ENCODE measurements at regions of chr4 and their contacts with region 1.

Region 1: GRCh38 chr4:82373816-82374625 is at the start of gene HNRNPD:
- DNase-seq: peak; percentile 89
- ATAC-seq: peak; percentile 94
- H3K4me3 Mint-ChIP-seq: peak within 1 kb of the TSS; percentile 94
- H3K27ac Mint-ChIP-seq: peak within 1 kb of the TSS; percentile 98
- H3K4me1 Mint-ChIP-seq: peaks cover 38% of the 10 kb centered on the region
- H3K27me3 Mint-ChIP-seq: no peaks in the 10 kb centered on the region
- total RNA-seq, gene HNRNPD: 356 to 360 TPM

Region 2: DNA sequence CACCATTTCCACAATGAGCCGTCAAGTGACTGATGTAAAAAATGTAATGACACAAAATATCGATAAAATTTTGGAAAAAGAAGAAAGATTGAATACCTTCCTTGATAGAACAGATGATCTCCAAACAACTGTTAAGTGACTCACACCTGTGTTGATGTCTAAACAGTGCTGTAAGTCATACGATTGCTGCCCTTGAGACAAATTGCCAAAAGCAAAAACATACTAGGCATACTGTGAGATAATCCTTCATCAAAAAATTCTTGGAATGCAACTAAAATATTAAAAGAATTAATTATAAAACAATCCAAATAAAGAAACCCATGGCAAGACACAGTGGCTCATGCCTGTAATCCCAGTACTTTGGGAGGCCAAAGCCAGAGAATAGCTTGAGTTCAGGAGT is 53.7 kb before region 1 on chr4:
- POLR2A ChIA-PET with region 1: no interaction called
- DNase-seq: no peak
- ATAC-seq: no peak
- H3K4me3 Mint-ChIP-seq: no peak overlapping the region
- H3K27ac Mint-ChIP-seq: no peak overlapping the region
- H3K4me1 Mint-ChIP-seq: peaks cover 2% of the 10 kb centered on the region
- H3K27me3 Mint-ChIP-seq: peaks cover 7% of the 10 kb centered on the region

Region 3: DNA sequence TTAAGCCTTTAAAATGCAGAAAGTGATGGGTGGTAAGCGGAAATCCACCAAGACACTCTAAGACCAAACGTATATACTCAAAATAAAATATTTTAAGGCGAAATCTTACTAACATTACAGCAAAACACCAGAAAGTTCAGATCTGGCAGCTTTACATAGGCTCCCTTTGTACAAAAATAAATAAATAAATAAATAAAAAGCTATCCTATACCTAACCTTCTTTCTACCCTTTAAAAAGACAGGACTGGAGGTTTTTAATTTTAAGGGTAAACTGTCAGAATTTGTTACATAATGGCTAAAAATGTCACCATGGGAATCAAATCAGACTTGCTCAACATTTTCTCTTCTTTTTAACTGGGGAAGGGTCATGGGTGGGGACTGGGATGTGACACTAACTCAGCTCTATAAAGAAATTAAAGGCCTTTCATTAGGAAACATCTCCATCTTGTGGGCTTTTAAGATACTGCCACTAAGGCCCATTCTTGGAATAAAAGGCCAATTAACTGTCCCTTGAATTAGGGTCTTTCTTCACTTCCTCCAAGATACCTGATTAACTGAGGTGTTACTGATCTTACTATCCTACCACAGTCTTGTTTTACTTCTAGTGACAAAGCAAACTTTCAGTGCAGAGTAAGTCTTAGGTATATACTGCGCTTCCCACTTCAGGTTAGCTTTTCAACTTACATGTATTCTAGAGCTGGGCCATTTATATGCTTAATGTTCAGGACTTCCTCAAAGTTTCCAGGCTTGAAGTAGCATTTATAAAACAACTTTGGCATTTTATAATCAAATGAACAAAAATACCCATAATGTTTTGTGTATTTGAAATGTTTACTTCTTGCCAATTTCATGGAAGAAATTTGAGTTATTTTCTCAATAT is 13.5 kb before region 1 on chr4:
- POLR2A ChIA-PET with region 1: interaction called, 10 read pairs
- DNase-seq: no peak
- ATAC-seq: no peak
- H3K4me3 Mint-ChIP-seq: peak overlapping the region; percentile 4
- H3K27ac Mint-ChIP-seq: peak overlapping the region; percentile 44
- H3K4me1 Mint-ChIP-seq: peaks cover 67% of the 10 kb centered on the region
- H3K27me3 Mint-ChIP-seq: no peaks in the 10 kb centered on the region

Region 4: DNA sequence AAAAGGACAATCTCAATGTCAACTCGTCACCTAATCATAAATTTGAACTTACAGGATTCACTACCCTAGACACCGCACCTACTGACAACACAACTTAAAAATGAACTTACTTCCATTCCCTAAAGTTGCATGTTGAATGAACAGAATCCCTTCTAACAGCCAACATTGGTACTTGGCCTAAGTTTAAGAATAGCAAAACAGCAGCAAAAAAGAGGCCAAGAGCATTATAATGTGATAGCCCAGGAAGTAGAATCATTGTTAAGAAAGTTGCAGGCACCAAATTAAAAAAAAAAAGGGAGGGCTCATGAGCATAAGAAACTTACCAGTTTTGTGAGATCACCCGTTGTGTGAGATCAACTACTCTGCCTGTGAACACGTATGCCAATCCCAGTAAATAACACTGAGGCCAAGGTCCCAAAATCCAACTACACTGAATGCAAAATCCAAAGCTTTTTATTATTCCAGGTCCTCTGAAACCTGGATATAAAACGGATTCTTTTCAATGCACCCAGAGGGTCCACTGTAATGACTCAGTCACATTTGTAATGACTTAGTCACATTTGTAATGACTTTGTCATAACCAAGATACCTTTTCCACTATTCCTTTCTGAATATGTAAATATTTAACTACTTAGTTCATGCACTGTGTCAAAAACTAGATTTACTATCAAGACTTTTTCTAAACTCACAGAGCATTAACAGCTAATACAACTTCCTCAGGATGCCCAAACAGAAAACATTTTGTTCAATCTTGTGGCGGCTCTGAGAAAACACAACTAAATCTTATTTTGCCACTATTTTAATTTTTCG is 49.4 kb after region 1 on chr4:
- POLR2A ChIA-PET with region 1: interaction called, 95 read pairs
- DNase-seq: no peak
- ATAC-seq: no peak
- H3K4me3 Mint-ChIP-seq: no peak overlapping the region
- H3K27ac Mint-ChIP-seq: no peak overlapping the region
- H3K4me1 Mint-ChIP-seq: peaks cover 41% of the 10 kb centered on the region
- H3K27me3 Mint-ChIP-seq: no peaks in the 10 kb centered on the region

Region 5: GRCh38 chr4:82428969-82429727 is 55.1 kb after region 1 on chr4:
- POLR2A ChIA-PET with region 1: interaction called, 95 read pairs
- DNase-seq: peak; percentile 99
- ATAC-seq: peak; percentile 59
- H3K4me3 Mint-ChIP-seq: peak overlapping the region; percentile 98
- H3K27ac Mint-ChIP-seq: peak overlapping the region; percentile 95
- H3K4me1 Mint-ChIP-seq: peaks cover 55% of the 10 kb centered on the region
- H3K27me3 Mint-ChIP-seq: no peaks in the 10 kb centered on the region

Measured in activated naive CD8-positive, alpha-beta T cell treated with anti-CD3 and anti-CD28 coated beads, Interleukin-2, amount 10 ng/mL, durations not matched to agents 7 days and 5 days (primary cell).